Mucosa of descending colon (tissue), 3 donors: ENCODE measurements at regions of chr14 and their contacts with region 1.

Region 1: DNA sequence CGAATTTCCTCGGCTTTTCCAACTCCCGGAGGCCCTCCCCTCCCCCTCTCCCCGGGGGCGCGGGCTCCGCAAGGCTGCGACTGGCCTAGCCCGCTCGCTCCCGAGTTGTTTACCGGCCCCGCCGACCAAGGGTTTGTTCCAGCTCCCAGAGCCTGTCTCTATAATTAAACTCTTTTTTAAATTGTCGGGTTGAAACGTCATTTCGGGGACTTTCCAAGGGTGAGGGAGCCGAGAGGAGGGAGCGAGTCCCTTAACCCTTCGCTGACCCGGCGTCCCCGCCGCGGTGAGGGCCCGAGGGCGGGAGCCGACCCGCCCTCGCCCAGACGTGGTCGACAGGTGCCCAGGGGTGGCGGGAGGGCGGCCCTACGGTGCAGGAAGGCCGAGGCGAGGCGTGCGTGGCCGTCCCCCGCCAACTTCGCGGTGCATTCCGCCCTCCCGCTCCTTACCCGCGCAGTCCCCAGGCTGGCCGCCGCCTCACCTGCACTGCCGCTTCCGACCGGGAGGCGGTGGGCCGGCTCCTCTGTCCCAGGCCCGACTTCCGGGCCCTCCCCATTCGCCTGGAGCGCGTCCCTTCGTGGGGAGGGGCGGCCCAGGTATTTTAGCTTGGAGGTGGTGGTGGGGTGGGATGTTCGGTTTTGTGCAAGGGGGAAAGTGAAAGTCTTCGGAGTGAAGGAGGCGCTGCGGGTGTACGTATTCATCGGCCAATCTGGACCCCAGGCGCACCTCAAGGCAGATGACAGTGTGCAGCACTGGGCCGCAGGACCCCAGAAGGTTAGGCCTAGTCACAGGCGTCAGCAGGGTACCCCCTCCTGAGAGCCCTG is 2.9 kb upstream of the ZFP36L1 start:
- DNase-seq: peak; percentile 87 to 92 (median 92)
- ATAC-seq: peak; percentile 72
- H3K4me3 ChIP-seq: peak overlapping the region; percentile 65
- H3K4me1 ChIP-seq: no peaks in the 10 kb centered on the region
- CTCF ChIP-seq: peak; percentile 86

Region 2: GRCh38 chr14:68392393-68393141 is 403.2 kb before region 1 on chr14:
- intact Hi-C with region 1: loop called in 1 of 2 experiments (anchors 10 kb)
- DNase-seq: peak; percentile 38 to 61 (median 42)
- ATAC-seq: peak; percentile 44
- H3K4me3 ChIP-seq: no peak overlapping the region
- H3K4me1 ChIP-seq: no peaks in the 10 kb centered on the region
- CTCF ChIP-seq: no peak

Region 3: GRCh38 chr14:68586896-68587751 is 208.7 kb before region 1 on chr14:
- intact Hi-C with region 1: no loop called
- DNase-seq: no peak
- ATAC-seq: peak; percentile 27
- H3K4me3 ChIP-seq: no peak overlapping the region
- H3K4me1 ChIP-seq: no peaks in the 10 kb centered on the region
- CTCF ChIP-seq: no peak

Region 4: GRCh38 chr14:68854421-68854820 is 58.6 kb after region 1 on chr14:
- intact Hi-C with region 1: no loop called
- DNase-seq: no peak
- ATAC-seq: no peak
- H3K4me3 ChIP-seq: no peak overlapping the region
- H3K4me1 ChIP-seq: no peaks in the 10 kb centered on the region
- CTCF ChIP-seq: no peak